Sigmoid colon (tissue), 7 donors: ENCODE measurements at regions of chr17 and their contacts with region 1.

Region 1: GRCh38 chr17:1573916-1574696 is 11.5 kb upstream of the PITPNA start:
- DNase-seq: peak; percentile 94
- H3K4me3 ChIP-seq: no peak overlapping the region
- H3K27ac ChIP-seq: peak overlapping the region; percentile 36 to 92 (median 76)
- H3K4me1 ChIP-seq: peaks cover 0 to 42% (median 37%) of the 10 kb centered on the region in 4 donors
- H3K27me3 ChIP-seq: no peaks in the 10 kb centered on the region
- CTCF ChIP-seq: peak; percentile 95 to 97 (median 96)
- EP300 ChIP-seq: no peak
- POLR2A ChIP-seq: no peak

Region 2: DNA sequence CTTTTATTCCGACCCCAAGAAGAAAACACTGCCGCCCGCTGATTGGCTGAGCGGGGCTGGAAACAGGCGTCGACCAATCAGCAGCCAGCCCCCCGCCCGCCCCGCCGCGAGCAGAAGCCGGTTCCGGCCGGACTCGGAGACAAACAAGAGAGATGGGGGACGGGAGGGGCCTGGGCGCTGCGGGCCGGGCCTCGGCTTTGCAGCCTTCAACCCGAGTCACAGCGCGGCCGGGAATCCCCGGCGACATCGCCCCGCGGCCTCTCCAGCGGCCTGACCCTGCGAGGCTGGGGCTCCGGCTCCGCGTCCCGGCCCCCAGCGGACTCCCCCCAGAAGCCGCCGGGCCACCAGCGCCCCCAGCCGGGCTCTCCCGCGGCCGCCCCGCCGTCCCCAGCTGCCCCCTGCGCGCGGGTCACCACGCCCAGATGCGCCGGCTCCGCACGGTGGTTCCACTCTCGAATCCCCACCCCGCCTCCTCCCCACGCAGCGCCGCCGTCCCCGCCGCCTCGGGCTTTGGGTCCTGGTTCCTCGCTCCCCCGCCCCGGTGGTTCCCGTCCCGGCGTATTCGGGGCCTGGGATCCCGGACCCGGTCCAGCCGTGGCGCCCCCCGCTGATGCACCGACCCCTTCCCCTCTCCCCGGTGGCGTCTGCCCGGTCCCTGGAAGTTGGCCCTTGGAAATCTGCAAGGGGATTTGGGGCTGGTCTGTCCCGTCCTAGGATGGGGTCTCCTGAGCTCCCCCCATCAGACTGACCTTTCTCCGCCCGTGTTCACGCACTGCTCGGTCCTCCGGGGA is 54.9 kb after region 1 on chr17:
- intact Hi-C with region 1: loop called (anchors 1 kb)
- DNase-seq: peak; percentile 97
- H3K4me3 ChIP-seq: peak overlapping the region; percentile 57 to 74 (median 66)
- H3K27ac ChIP-seq: peak overlapping the region; percentile 86 to 97 (median 94)
- H3K4me1 ChIP-seq: peaks cover 0 to 30% (median 20%) of the 10 kb centered on the region in 4 donors
- H3K27me3 ChIP-seq: no peaks in the 10 kb centered on the region
- CTCF ChIP-seq: peak in 1 of 4 experiments; percentile 50
- EP300 ChIP-seq: peak in 1 of 4 donors; percentile 18
- POLR2A ChIP-seq: peak in 1 of 2 donors; percentile 43

Region 3: GRCh38 chr17:1716076-1716995 is 142.2 kb after region 1 on chr17:
- intact Hi-C with region 1: loop called (anchors 2 kb)
- DNase-seq: peak; percentile 100
- H3K4me3 ChIP-seq: peak overlapping the region; percentile 73 to 99 (median 90)
- H3K27ac ChIP-seq: peak overlapping the region; percentile 99 to 100 (median 100)
- H3K4me1 ChIP-seq: peaks cover 0 to 49% (median 39%) of the 10 kb centered on the region in 4 donors
- H3K27me3 ChIP-seq: no peaks in the 10 kb centered on the region
- CTCF ChIP-seq: no peak
- EP300 ChIP-seq: peak in 1 of 4 donors; percentile 94
- POLR2A ChIP-seq: peak; percentile 100